Cardiac septum (tissue), 1 donor: ENCODE measurements at regions of chr1 and their contacts with region 1.

Region 1: GRCh38 chr1:236281654-236282424 is at the start of gene ERO1B:
- DNase-seq: peak; percentile 99
- total RNA-seq, gene ERO1B: 5.8 TPM

Region 2: DNA sequence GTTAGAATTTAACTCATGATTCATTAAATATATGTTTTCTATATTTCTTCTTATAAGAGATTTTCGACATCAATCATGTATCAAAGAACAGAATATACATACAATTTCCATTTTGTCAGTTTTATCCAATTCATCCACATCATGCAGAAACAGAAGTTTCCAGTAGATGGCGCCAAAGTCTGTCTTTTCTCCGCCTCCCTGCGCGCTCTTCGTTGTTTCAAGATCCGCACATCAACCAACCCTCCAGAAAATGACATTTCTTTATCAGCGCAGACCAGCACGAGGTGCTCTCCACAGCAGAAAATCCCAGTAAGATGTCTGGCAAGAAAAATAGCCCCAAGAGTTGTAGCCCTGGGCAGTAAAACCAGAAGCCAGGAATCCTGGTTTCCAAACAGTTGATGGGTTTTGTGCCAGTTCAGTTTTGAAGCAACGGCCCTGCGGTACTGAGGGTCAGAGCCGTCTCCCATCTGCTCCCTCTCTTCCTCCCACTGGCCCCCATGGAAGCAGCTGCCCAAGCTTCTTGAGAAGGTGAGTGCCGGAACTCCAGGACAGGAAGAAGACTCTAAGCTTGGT is 178.1 kb before region 1 on chr1:
- intact Hi-C with region 1: loop called (anchors 10 kb)
- DNase-seq: no peak

Region 3: DNA sequence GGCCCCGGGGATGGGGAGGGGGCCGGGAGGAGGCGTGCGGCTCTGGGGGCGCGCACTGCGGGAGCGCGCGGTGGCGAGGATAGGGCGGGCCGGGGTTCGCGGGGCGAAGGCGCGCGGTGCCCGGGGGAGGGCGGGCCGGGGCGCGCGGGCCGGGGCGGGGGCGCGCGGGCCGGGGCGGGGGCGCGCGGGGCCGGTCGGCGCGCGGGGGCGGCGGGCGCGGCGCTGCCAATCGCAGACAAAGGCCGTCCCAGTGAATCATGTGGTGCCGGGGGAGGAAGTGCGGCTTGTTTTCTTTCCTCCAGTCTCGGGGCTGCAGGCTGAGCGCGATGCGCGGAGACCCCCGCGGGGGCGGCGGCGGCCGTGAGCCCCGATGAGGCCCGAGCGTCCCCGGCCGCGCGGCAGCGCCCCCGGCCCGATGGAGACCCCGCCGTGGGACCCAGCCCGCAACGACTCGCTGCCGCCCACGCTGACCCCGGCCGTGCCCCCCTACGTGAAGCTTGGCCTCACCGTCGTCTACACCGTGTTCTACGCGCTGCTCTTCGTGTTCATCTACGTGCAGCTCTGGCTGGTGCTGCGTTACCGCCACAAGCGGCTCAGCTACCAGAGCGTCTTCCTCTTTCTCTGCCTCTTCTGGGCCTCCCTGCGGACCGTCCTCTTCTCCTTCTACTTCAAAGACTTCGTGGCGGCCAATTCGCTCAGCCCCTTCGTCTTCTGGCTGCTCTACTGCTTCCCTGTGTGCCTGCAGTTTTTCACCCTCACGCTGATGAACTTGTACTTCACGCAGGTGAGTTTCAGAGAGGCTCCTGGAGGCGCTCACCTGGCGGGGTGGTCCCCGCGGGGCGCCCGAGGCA is 139.4 kb before region 1 on chr1 and contains the start of gene GPR137B:
- intact Hi-C with region 1: loop called (anchors 5 kb)
- DNase-seq: peak; percentile 80
- total RNA-seq, gene GPR137B: 44.6 TPM

Region 4: GRCh38 chr1:236239092-236239585 is 42.7 kb before region 1 on chr1:
- intact Hi-C with region 1: no loop called
- DNase-seq: no peak